Activated CD4-positive, alpha-beta memory T cell treated with anti-CD3 and anti-CD28 coated beads for 36 hours (primary cell): ENCODE measurements at regions of chr1 and their contacts with region 1.

Region 1: DNA sequence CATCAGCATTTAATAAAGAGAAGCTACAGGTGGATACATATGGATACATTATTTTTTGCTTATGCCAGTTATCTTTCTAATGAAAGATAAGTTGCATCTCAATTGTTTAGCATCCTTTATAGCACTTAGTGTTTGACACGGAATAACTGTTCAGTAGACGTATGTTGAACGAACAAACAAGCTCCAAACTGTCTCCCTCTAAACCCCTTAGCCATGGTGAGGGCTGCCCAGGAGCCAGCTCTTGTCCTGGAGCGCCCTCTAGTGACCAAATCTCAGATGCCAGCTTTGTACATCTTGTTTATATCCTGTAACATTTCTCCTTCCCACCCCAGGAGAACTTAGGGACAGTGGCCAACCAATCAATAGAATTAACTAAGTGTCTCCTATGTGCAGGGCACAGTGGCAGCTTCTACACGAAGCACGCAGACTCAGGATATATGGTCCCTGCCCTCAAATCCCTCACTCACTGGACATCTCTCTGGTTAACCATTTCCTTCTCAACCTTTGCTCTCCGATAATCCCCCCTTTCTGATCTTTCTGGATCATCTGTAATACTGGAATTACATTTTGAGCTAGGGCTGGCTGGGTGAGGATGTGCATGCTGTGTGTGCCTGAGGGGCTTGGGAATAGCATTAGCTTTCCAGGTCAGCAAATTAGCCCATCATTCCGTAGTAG is 22.9 kb downstream of the KCNA10 start:
- DNase-seq: peak; percentile 86
- H3K4me3 Mint-ChIP-seq: no peak overlapping the region
- H3K27ac Mint-ChIP-seq: no peak overlapping the region
- H3K4me1 Mint-ChIP-seq: no peaks in the 10 kb centered on the region
- H3K27me3 Mint-ChIP-seq: no peaks in the 10 kb centered on the region

Region 2: DNA sequence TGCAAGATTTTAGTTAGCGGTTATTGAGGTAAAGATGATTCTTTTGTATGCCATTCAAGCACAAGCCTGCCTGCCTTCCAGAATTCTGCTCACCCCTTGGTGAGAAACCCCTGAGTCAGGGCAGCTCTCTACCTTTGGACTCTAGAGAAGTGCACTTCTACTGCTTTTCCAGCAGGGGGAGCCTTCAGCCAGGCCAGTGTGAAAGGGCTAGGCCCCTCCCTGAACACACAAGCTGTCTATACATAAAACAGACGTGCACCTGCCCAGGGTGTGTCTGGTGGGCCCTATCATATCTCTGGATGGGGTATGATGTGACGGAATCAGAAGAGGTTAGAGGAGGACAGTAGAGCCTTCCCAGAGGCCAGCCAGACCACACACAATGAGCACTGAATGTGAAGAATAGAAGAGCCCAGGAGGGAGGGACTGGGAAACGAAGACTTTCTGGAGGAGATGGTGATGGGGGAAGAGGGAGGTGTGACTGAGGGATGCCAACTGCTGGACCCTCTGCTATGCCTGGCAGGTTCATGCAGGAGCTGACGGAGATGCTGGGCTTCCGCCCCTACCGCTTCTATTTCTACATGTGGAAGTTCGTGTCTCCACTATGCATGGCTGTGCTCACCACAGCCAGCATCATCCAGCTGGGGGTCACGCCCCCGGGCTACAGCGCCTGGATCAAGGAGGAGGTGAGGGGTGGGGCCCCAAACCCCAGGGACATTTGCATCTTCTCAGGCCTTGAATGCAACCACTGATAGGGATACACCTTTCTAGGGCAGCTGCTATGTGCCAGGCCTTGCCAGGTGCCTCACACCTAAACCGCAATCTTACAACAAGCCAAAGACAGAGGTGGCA is 298.9 kb before region 1 on chr1:
- CTCF ChIA-PET with region 1: interaction called, 80 read pairs
- POLR2A ChIA-PET with region 1: no interaction called
- intact Hi-C with region 1: no loop called
- DNase-seq: peak; percentile 63
- H3K4me3 Mint-ChIP-seq: no peak overlapping the region
- H3K27ac Mint-ChIP-seq: no peak overlapping the region
- H3K4me1 Mint-ChIP-seq: no peaks in the 10 kb centered on the region
- H3K27me3 Mint-ChIP-seq: no peaks in the 10 kb centered on the region

Region 3: GRCh38 chr1:110312188-110313121 is 183.6 kb before region 1 on chr1:
- CTCF ChIA-PET with region 1: interaction called, 27 read pairs
- POLR2A ChIA-PET with region 1: no interaction called
- intact Hi-C with region 1: no loop called
- DNase-seq: peak; percentile 81
- H3K4me3 Mint-ChIP-seq: no peak overlapping the region
- H3K27ac Mint-ChIP-seq: no peak overlapping the region
- H3K4me1 Mint-ChIP-seq: no peaks in the 10 kb centered on the region
- H3K27me3 Mint-ChIP-seq: no peaks in the 10 kb centered on the region

Region 4: DNA sequence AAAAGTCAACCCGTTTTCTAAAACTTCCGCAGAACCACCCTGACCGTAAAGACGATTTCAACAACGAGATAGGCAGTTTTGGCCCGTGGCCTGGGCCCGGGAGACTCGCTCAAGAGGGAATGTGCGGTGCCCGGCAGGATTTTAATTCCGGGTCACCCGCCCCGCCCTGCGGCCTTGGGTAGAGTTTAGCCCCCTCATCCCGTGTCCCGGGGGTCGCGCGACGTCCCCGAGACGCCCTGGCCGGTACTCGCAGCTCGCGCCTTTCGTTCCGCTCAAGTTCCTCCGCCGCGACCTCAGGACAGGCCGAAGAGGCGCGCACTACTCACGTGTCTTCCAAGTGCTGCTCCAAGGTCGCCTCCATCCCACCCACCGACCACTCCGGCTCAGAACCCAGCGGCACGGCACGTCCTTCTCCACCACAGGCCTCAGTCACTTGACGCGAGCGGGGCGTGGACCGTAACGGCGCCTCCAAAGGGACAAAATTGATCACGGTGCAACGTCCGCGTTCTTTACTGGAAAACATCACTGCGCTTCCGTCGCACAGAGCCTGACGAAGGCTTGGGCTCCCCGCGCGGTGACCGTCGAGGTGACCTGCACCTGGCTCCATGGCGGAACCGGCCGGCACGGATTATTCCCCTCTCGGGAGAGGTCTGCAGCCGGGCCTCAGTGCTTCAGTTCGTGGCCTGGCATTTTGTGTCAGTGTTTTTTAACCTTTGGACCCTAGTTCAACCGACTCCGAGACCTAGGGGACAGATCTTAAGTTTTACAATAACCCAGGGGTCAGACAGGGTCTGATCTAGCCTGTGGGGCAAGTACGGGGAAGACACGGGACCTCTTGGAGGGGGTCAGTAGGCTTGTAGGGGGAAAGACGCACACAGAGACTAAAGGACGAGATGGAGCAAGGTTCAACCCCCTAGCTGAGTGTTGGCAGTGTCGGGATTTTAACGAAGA is 88.5 kb before region 1 on chr1 and contains the start of gene LAMTOR5:
- CTCF ChIA-PET with region 1: interaction called, 125 read pairs
- POLR2A ChIA-PET with region 1: no interaction called
- intact Hi-C with region 1: loop called (anchors 1 kb)
- DNase-seq: peak; percentile 96
- H3K4me3 Mint-ChIP-seq: peak within 1 kb of the TSS; percentile 100
- H3K27ac Mint-ChIP-seq: peak within 1 kb of the TSS; percentile 97
- H3K4me1 Mint-ChIP-seq: peaks cover 17% of the 10 kb centered on the region
- H3K27me3 Mint-ChIP-seq: no peaks in the 10 kb centered on the region
- total RNA-seq, gene LAMTOR5: 151 to 153 TPM

Region 5: GRCh38 chr1:110477041-110477440 is 19.0 kb before region 1 on chr1:
- CTCF ChIA-PET with region 1: interaction called, 41 read pairs
- POLR2A ChIA-PET with region 1: no interaction called
- intact Hi-C with region 1: no loop called
- DNase-seq: no peak
- H3K4me3 Mint-ChIP-seq: no peak overlapping the region
- H3K27ac Mint-ChIP-seq: no peak overlapping the region
- H3K4me1 Mint-ChIP-seq: peaks cover 6% of the 10 kb centered on the region
- H3K27me3 Mint-ChIP-seq: no peaks in the 10 kb centered on the region

Region 6: GRCh38 chr1:110508038-110508940 is 12.2 kb after region 1 on chr1:
- CTCF ChIA-PET with region 1: interaction called, 15 read pairs
- POLR2A ChIA-PET with region 1: no interaction called
- intact Hi-C with region 1: no loop called
- DNase-seq: no peak
- H3K4me3 Mint-ChIP-seq: no peak overlapping the region
- H3K27ac Mint-ChIP-seq: no peak overlapping the region
- H3K4me1 Mint-ChIP-seq: no peaks in the 10 kb centered on the region
- H3K27me3 Mint-ChIP-seq: peaks cover 8% of the 10 kb centered on the region

Region 7: GRCh38 chr1:110675060-110675791 is 179.2 kb after region 1 on chr1:
- CTCF ChIA-PET with region 1: no interaction called
- POLR2A ChIA-PET with region 1: no interaction called
- intact Hi-C with region 1: no loop called
- DNase-seq: peak; percentile 14
- H3K4me3 Mint-ChIP-seq: peak overlapping the region; percentile 95
- H3K27ac Mint-ChIP-seq: peak overlapping the region; percentile 9
- H3K4me1 Mint-ChIP-seq: peaks cover 25% of the 10 kb centered on the region
- H3K27me3 Mint-ChIP-seq: no peaks in the 10 kb centered on the region

Region 8: DNA sequence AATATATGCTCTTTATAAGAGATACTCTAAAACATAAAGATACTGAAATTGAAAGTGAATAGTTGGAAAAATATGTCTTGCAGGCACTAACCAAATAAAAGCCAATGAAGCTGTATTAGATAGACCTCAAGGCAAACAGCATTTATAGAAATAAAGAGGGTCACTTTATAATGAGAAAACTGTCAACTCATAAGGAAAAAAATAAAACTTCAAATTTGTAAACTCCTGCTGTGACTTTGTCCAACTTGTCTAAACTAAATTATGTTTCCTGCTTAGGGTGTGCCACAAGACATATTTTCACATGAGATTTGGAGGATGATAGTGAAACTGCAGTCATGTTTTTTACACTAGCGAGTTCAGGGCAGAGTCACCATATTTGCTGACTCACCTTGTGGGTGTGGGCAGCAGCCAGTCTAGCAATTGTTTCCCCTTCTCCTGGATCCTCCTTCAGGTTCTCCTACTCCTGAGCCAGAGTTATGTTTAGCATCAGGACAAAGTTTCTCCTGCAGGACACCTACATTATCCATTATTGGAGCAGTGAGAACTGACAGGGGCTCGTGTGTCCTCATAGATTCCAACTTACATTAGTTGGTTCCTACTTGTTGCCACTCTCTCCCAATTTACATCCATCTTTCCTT is 420.7 kb after region 1 on chr1:
- CTCF ChIA-PET with region 1: no interaction called
- POLR2A ChIA-PET with region 1: no interaction called
- intact Hi-C with region 1: no loop called
- DNase-seq: peak; percentile 54
- H3K4me3 Mint-ChIP-seq: no peak overlapping the region
- H3K27ac Mint-ChIP-seq: no peak overlapping the region
- H3K4me1 Mint-ChIP-seq: peaks cover 15% of the 10 kb centered on the region
- H3K27me3 Mint-ChIP-seq: no peaks in the 10 kb centered on the region